ENCODE measurements at regions of chr3 and their contacts with region 1.

Region 1: GRCh38 chr3:138186803-138187295 is 252 bp upstream of the ARMC8 start:
- DNase-seq: peak; percentile 81 to 91
- ATAC-seq: peak; percentile 26 to 35
- H3K4me3 ChIP-seq: peak overlapping the region; percentile 72 to 99 (median 92)
- H3K27ac ChIP-seq: peak overlapping the region; percentile 92 to 99 (median 98)
- H3K4me1 ChIP-seq: peaks cover 36 to 38% of the 10 kb centered on the region in 2 donors
- H3K27me3 ChIP-seq: no peaks in the 10 kb centered on the region
- CTCF ChIP-seq: no peak
- POLR2A ChIP-seq: no peak

Region 2: GRCh38 chr3:137948400-137949072 is 238.3 kb before region 1 on chr3:
- in situ Hi-C with region 1: no loop called
- intact Hi-C with region 1: no loop called
- DNase-seq: no peak
- ATAC-seq: no peak
- H3K4me3 ChIP-seq: no peak overlapping the region
- H3K27ac ChIP-seq: no peak overlapping the region
- H3K4me1 ChIP-seq: no peaks in the 10 kb centered on the region
- H3K27me3 ChIP-seq: no peaks in the 10 kb centered on the region
- CTCF ChIP-seq: no peak
- POLR2A ChIP-seq: no peak

Region 3: DNA sequence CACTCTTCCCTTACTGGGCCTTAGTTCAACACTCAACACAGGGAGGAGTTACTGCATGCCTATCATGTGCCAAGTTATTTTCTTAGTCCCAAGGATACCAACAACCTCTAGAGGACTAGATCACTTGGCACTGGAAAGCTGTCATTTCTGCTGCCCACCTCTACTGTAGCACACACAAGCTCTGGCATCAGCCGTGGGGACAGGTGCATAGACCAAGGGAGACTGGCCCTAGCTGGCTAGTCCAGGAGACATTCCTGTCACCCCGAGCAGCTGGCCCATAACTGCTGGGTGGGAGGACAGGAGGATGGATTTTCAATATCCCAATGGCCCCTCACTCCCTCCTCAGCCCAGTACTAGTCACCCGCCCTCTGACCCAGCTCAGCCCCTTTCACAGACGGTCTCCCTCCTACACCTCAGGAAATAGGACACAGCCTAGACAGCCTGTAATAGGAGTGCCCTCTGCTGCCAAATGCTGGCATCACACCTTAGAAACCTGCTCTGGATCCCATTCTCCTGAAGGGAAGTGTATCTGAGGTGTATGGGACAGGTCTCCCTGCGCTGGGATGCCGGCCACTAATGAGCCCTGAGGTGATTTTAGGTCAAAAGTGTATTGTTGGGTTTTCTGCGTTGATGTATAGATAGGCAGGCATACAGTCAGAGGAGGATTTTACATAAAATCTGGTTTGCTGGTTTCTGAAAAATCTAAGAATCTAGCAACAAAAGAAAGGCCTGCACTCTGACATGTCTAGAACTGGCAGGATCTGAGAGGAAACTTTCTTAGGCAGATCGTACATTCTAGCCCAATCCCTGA is 68.0 kb before region 1 on chr3:
- in situ Hi-C with region 1: no loop called
- intact Hi-C with region 1: loop called (anchors 2 kb)
- DNase-seq: peak; percentile 35 to 62
- ATAC-seq: peak; percentile 63 to 74
- H3K4me3 ChIP-seq: no peak overlapping the region
- H3K27ac ChIP-seq: no peak overlapping the region
- H3K4me1 ChIP-seq: peaks cover 0 to 19% of the 10 kb centered on the region in 2 donors
- H3K27me3 ChIP-seq: no peaks in the 10 kb centered on the region
- CTCF ChIP-seq: peak; percentile 47 to 79 (median 65)
- POLR2A ChIP-seq: no peak

Region 4: GRCh38 chr3:138174421-138175122 is 12.3 kb before region 1 on chr3 and contains the start of gene DBR1:
- in situ Hi-C with region 1: no loop called
- intact Hi-C with region 1: loop called (anchors 1 kb)
- DNase-seq: peak; percentile 65 to 66
- ATAC-seq: peak; percentile 92 to 94
- H3K4me3 ChIP-seq: peak within 1 kb of the TSS; percentile 66 to 99 (median 83)
- H3K27ac ChIP-seq: peak within 1 kb of the TSS; percentile 78 to 83 (median 82)
- H3K4me1 ChIP-seq: peaks cover 5 to 8% of the 10 kb centered on the region in 2 donors
- H3K27me3 ChIP-seq: no peaks in the 10 kb centered on the region
- CTCF ChIP-seq: no peak
- POLR2A ChIP-seq: peak; percentile 50 to 71
- total RNA-seq, gene DBR1: 6.5 to 22.2 (median 6.6) TPM

Region 5: GRCh38 chr3:138347960-138348753 is 161.3 kb after region 1 on chr3 and contains the start of gene MRAS:
- in situ Hi-C with region 1: loop called in 1 of 4 experiments (anchors 25 kb)
- intact Hi-C with region 1: loop called (anchors 1 kb)
- DNase-seq: peak; percentile 73 to 88
- ATAC-seq: peak; percentile 57 to 76
- H3K4me3 ChIP-seq: peak within 1 kb of the TSS; percentile 63 to 87 (median 74)
- H3K27ac ChIP-seq: peak within 1 kb of the TSS; percentile 93 to 98 (median 97)
- H3K4me1 ChIP-seq: peaks cover 37 to 41% of the 10 kb centered on the region in 2 donors
- H3K27me3 ChIP-seq: no peaks in the 10 kb centered on the region
- CTCF ChIP-seq: peak; percentile 21 to 65 (median 51)
- POLR2A ChIP-seq: peak; percentile 94 to 98
- total RNA-seq, gene MRAS: 45.8 to 149 (median 57.7) TPM

Region 6: GRCh38 chr3:138493804-138494606 is 307.2 kb after region 1 on chr3:
- in situ Hi-C with region 1: no loop called
- intact Hi-C with region 1: loop called (anchors 10 kb)
- DNase-seq: no peak
- ATAC-seq: peak; percentile 95
- H3K4me3 ChIP-seq: no peak overlapping the region
- H3K27ac ChIP-seq: peak overlapping the region; percentile 71 to 85 (median 82)
- H3K4me1 ChIP-seq: peaks cover 36 to 38% of the 10 kb centered on the region in 2 donors
- H3K27me3 ChIP-seq: no peaks in the 10 kb centered on the region
- CTCF ChIP-seq: no peak
- POLR2A ChIP-seq: no peak

Region 7: GRCh38 chr3:138915503-138916498 is 729.0 kb after region 1 on chr3:
- in situ Hi-C with region 1: no loop called
- intact Hi-C with region 1: loop called (anchors 5 kb)
- DNase-seq: peak; percentile 82 to 94
- ATAC-seq: peak; percentile 91 to 93
- H3K4me3 ChIP-seq: peak overlapping the region; percentile 80 to 98 (median 87)
- H3K27ac ChIP-seq: peak overlapping the region; percentile 92 to 95 (median 94)
- H3K4me1 ChIP-seq: peaks cover 3 to 4% of the 10 kb centered on the region in 2 donors
- H3K27me3 ChIP-seq: no peaks in the 10 kb centered on the region
- CTCF ChIP-seq: peak; percentile 86 to 94 (median 89)
- POLR2A ChIP-seq: no peak

Region 8: GRCh38 chr3:139343895-139344856 is 1157.3 kb after region 1 on chr3 and contains the start of gene MRPS22:
- in situ Hi-C with region 1: no loop called
- intact Hi-C with region 1: no loop called
- DNase-seq: peak; percentile 74 to 78
- ATAC-seq: peak; percentile 98 to 99
- H3K4me3 ChIP-seq: peak within 1 kb of the TSS; percentile 70 to 99 (median 90)
- H3K27ac ChIP-seq: peak within 1 kb of the TSS; percentile 86 to 93 (median 86)
- H3K4me1 ChIP-seq: peaks cover 19% of the 10 kb centered on the region in 2 donors
- H3K27me3 ChIP-seq: no peaks in the 10 kb centered on the region
- CTCF ChIP-seq: no peak
- POLR2A ChIP-seq: peak in 1 of 2 donors; percentile 31
- total RNA-seq, gene MRPS22: 96.4 to 140 (median 116) TPM

Measured in gastrocnemius medialis (tissue), 4 donors.